ENCODE measurements at regions of chr9 and their contacts with region 1.

Region 1: GRCh38 chr9:101915482-101915881 is 177.0 kb upstream of the GRIN3A start:
- ATAC-seq: peak in 2 of 8 experiments; percentile 42 to 57
- H3K4me3 ChIP-seq: no peak overlapping the region
- H3K27ac ChIP-seq: no peak overlapping the region
- H3K4me1 ChIP-seq: no peaks in the 10 kb centered on the region

Region 2: GRCh38 chr9:101858026-101858425 is 57.5 kb before region 1 on chr9:
- in situ Hi-C with region 1: loop called in 1 of 9 experiments (anchors 10 kb)
- ATAC-seq: no peak
- H3K4me3 ChIP-seq: no peak overlapping the region
- H3K27ac ChIP-seq: no peak overlapping the region
- H3K4me1 ChIP-seq: no peaks in the 10 kb centered on the region

Region 3: DNA sequence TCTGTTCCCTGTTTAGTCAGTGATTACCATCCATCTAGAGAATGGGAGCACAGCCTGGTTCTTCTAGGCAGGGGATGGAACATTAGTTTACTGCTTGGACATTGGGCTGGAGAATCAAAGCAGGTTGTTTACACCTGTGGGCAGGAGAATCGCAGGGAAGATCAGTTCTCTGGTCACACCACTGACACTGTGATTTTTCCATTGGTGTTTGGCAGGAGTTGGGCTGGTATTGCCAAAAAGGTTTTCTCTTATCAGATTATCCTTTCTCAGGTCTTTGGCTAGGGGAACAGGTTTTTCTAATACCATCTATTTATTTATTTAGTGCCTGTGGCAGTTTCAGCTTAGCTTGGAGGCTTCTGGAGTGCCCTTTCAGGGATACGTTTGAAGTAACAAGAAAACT is 42.2 kb after region 1 on chr9:
- in situ Hi-C with region 1: no loop called
- ATAC-seq: no peak
- H3K4me3 ChIP-seq: no peak overlapping the region
- H3K27ac ChIP-seq: no peak overlapping the region
- H3K4me1 ChIP-seq: no peaks in the 10 kb centered on the region

Measured in motor neuron (in vitro differentiated cells).